ENCODE measurements at regions of chr20 and their contacts with region 1.

Region 1: GRCh38 chr20:22586645-22587310 is 2.4 kb upstream of the FOXA2 start:
- DNase-seq: peak; percentile 61 to 79
- H3K4me3 ChIP-seq: peak overlapping the region in 1 of 3 donors; percentile 22
- H3K27ac ChIP-seq: peak overlapping the region in 2 of 3 donors; percentile 70 to 87
- H3K4me1 ChIP-seq: peaks cover 14 to 27% of the 10 kb centered on the region in 2 donors
- H3K27me3 ChIP-seq: no peaks in the 10 kb centered on the region
- CTCF ChIP-seq: peak in 5 of 6 experiments; percentile 58 to 83 (median 72)
- POLR2A ChIP-seq: peak in 1 of 2 donors; percentile 76

Region 2: DNA sequence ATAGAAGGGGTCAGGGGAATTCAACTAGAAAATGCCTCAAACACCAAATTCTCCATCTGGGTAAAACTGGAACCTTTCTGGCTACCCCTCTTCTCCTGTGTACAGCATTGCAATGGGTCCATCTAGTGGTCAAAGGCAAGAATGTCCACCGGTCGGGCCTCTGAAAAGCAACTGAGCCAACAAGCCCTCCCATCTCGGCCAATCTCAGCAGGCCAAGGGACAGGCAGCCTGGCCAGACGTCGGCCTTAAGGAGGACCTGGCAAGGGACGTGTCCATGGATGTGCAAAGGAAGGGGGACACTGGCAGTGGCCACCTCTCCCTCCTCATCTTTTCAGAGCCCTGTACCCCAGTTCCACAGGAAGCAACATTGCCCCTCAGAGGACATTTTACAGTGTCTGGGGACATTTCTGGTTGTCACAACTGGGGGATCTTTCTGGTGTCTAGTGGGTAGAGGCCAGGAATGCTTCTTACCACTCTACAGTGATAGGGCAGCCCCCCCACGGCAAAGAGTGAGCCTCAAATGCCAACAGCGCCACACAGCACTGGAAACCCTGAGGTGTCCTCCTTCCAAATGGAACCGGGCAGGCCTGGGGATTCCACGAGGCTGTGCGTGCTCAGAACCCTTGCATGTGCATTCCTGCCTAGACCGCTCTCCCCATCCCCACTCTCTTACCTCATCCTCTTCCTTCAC is 97.4 kb after region 1 on chr20:
- intact Hi-C with region 1: loop called (anchors 10 kb)
- DNase-seq: peak; percentile 76 to 78
- H3K4me3 ChIP-seq: no peak overlapping the region
- H3K27ac ChIP-seq: peak overlapping the region in 2 of 3 donors; percentile 25 to 48
- H3K4me1 ChIP-seq: peaks cover 17 to 36% of the 10 kb centered on the region in 2 donors
- H3K27me3 ChIP-seq: no peaks in the 10 kb centered on the region
- CTCF ChIP-seq: peak; percentile 72 to 96 (median 90)
- POLR2A ChIP-seq: no peak